ENCODE measurements at regions of chr9 and their contacts with region 1.

Region 1: GRCh38 chr9:121593066-121593465 is 58.4 kb upstream of the DAB2IP start:
- DNase-seq: no peak
- H3K4me3 ChIP-seq: no peak overlapping the region
- H3K27ac ChIP-seq: no peak overlapping the region
- H3K4me1 ChIP-seq: peaks cover 0 to 6% (median 2%) of the 10 kb centered on the region in 4 experiments; a peak in 3 of 7 replicates
- H3K27me3 ChIP-seq: peaks cover 0 to 2% (median 0%) of the 10 kb centered on the region in 4 experiments; a peak in 1 of 7 replicates
- CTCF ChIP-seq: no peak
- EP300 ChIP-seq: no peak
- POLR2A ChIP-seq: no peak
- RAD21 ChIP-seq: no peak

Region 2: GRCh38 chr9:121566481-121567465 is 26.3 kb before region 1 on chr9:
- CTCF ChIA-PET with region 1: interaction called, 10 read pairs
- POLR2A ChIA-PET with region 1: no interaction called
- DNase-seq: no peak
- H3K4me3 ChIP-seq: no peak overlapping the region
- H3K27ac ChIP-seq: no peak overlapping the region
- H3K4me1 ChIP-seq: peaks cover 0 to 10% (median 0%) of the 10 kb centered on the region in 4 experiments; a peak in 2 of 7 replicates
- H3K27me3 ChIP-seq: no peaks in the 10 kb centered on the region
- CTCF ChIP-seq: no peak
- EP300 ChIP-seq: no peak
- POLR2A ChIP-seq: no peak
- RAD21 ChIP-seq: no peak

Region 3: DNA sequence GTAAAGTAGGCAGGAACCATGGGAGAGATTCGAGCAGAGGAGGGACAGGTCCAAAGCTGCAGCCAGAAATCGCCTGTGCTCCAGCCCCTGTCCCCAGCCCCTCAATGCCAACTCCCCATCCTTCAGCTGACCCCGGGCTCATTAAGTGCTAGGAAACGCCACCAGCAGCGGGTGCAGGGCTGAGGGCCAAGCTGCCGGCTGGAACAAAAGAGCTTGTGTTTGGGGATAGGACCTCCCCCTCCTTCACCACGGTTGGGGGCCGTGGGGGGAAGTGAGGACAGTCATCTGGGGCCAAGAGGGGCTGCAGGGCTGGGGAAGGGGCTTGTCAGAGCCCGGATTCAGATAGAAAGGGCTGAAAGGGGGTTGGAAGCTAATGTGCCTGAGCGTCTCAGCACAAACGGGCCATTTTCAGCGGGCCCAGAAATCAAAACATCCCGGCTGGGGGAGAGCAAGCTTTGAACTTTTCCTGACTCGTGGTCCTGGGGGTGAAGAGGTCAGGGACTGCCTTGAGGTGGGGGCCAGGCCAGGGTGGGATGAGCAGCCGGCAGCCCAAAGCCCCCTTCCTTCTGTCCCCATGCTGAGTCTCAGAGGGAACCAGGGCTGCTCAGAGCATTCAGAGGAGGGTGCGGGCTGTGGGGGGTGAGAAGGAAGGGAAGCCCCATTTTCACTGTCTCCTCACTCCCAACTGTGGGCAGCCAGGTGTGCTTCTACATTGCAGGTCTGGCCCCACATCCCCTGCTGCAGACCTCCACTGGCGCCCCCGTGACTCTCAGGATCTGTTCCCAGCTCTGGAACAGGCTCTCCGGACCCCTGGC is 11.1 kb before region 1 on chr9:
- CTCF ChIA-PET with region 1: interaction called, 38 read pairs
- POLR2A ChIA-PET with region 1: interaction called, 5 read pairs
- DNase-seq: peak in 1 of 2 experiments; percentile 60
- H3K4me3 ChIP-seq: no peak overlapping the region
- H3K27ac ChIP-seq: no peak overlapping the region
- H3K4me1 ChIP-seq: peaks cover 0 to 16% (median 12%) of the 10 kb centered on the region in 4 experiments; a peak in 6 of 7 replicates
- H3K27me3 ChIP-seq: no peaks in the 10 kb centered on the region; a peak in 1 of 7 replicates
- CTCF ChIP-seq: no peak
- EP300 ChIP-seq: no peak
- POLR2A ChIP-seq: no peak
- RAD21 ChIP-seq: no peak